GM10248 (cell line): ENCODE measurements at regions of chr6 and their contacts with region 1.

Region 1: DNA sequence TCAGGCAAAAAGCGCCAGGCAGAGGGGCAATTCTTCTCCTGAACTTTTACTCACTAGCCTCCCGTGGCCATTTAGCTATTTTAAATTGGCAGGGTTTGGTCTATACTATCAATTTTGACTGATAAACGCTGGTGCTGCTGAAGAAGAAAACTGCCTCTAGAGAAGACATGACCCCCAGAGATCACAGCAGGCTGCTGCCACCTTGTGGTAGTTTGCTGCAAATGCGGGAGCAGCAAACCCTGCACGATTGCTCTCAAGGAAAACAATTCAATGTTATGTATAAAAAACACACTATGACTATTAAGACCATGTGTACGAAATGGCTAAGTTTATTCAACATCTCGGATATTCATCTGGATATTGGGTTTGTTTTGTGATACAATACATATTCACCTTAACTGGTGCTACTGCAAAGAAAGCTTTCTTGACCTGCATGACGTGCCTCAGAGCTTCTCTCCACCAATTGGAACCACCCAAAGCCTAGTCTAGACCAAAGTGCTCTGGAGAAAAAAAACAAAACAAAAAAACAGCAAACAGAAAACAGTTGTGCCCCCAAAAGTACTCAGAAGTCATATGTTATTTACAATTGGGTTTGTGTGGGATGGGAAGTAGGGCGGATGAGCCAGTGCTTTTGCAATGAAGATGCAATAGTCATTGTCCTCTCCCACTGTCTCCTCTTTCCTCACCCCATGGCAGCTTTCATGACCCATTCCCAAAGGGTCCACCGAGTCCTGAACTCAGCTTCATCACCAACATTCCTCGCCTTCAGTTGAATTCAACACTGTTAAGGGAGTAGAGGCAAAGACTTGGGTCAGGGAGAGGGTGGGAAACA is 19.6 kb upstream of the IL17F start:
- DNase-seq: peak; percentile 66
- CTCF ChIP-seq: peak; percentile 87

Region 2: GRCh38 chr6:52063584-52064344 is 200.2 kb before region 1 on chr6:
- CTCF ChIA-PET with region 1: interaction called, 11 read pairs
- POLR2A ChIA-PET with region 1: no interaction called
- DNase-seq: peak; percentile 29
- CTCF ChIP-seq: peak; percentile 50

Region 3: GRCh38 chr6:52155791-52156576 is 107.9 kb before region 1 on chr6:
- CTCF ChIA-PET with region 1: interaction called, 164 read pairs
- POLR2A ChIA-PET with region 1: no interaction called
- DNase-seq: peak; percentile 24
- CTCF ChIP-seq: no peak

Region 4: DNA sequence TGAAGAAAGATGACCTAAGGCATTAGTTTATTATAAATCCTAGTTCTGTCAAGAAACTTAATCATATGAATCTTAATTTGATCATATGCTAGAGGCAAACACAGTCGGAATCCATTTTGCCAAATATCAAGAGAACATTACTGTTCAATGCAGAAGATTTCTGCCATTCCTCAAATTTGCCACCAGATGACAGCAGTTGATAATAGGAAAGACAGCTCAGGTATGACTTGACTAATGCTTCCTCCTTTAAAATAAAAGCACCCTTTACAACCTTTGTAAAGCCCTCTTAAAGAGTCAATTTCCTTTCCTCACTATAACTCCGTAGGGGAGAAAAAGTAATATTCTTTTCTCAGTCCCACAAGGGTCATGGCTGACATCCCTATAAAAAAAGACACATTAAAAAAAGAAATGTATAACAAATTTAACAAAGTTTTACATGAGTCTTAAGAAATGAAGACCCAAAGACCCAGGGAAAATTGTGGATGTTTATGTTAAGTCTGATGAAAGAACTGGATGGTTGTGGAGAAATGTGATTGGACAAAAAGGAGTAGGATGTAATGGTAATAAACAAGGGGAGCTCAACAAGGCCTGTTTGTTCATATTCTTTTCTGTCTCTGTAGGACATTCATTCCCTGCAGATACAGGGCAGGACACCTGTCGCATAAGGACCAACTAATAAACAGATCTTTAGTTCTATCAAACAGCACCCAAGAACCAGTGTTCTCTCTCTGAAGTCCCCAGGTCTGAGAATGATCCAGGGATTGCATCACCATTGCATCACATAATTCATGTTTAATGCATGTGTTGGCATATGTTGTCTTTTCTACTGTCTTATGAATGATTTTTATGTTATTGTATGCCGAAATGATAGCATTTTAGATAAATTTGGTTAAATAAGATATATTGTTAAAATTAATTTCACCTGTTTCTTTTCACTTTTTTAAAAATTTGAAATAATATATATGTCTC is 100.7 kb before region 1 on chr6:
- CTCF ChIA-PET with region 1: interaction called, 164 read pairs
- POLR2A ChIA-PET with region 1: no interaction called
- DNase-seq: peak; percentile 30
- CTCF ChIP-seq: peak; percentile 74

Region 5: DNA sequence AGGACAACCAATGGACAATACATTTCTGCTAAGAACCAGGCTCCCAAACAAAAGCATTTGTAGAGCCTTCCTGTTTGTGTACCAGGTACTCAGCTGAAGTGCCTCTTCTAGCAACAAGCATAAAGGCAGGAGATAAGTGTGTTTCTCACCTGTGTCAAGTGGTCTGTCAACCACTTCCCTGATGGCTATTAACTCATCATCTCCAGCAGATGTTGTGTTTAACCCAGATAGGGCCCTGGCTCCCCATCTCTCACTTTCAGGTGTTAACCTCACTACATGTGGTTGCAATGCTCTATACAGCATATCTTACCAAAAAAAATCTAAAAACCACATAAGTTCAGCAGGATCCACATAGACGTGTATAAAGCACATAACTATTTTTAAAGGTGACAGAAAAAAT is 87.4 kb before region 1 on chr6:
- CTCF ChIA-PET with region 1: interaction called, 14 read pairs
- POLR2A ChIA-PET with region 1: no interaction called
- DNase-seq: no peak
- CTCF ChIP-seq: no peak

Region 6: DNA sequence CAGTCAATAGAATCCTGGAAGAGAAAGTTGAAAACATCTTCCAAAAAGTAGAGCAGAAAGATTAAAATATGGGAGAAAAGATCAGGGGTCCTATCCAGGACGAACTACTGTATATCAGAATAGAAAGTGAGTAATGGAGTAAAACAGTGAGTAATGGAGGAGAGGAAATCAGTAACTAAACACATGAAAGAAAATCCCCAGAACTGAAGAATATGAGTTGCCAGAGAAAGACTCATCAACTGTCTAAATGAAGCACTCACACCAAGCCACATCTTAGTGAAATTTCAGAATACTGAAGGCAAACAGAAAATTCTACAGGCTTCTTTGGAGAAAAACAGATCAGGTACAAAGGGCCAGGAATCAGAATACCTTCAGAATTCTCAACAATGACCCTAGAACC is 62.9 kb before region 1 on chr6:
- CTCF ChIA-PET with region 1: no interaction called
- POLR2A ChIA-PET with region 1: no interaction called
- DNase-seq: no peak
- CTCF ChIP-seq: no peak

Region 7: GRCh38 chr6:52233975-52234823 is 29.7 kb before region 1 on chr6:
- CTCF ChIA-PET with region 1: interaction called, 54 read pairs
- POLR2A ChIA-PET with region 1: no interaction called
- DNase-seq: peak; percentile 52
- CTCF ChIP-seq: peak; percentile 66

Region 8: DNA sequence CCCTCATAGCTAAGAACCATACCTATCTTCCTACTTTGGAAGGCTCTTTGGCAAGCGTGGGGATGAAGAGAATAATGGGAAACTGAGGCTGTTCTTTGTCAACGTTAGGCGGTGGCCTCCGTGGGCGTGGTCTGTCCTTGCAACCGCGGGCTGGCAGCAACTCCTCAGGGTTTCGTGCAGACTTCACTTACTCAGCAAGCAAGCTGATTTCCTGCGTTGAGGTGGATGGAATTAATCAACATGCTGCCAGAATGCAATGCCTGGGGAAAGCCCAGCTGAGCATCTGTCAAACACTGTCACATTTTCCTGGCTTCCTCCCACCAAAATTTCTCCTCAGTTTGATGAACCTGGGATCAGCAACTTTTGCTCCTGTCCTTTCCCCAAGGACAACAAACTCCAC is 10.4 kb before region 1 on chr6:
- CTCF ChIA-PET with region 1: interaction called, 47 read pairs
- POLR2A ChIA-PET with region 1: no interaction called
- DNase-seq: no peak
- CTCF ChIP-seq: no peak